ENCODE measurements at regions of chr12 and their contacts with region 1.

Region 1: DNA sequence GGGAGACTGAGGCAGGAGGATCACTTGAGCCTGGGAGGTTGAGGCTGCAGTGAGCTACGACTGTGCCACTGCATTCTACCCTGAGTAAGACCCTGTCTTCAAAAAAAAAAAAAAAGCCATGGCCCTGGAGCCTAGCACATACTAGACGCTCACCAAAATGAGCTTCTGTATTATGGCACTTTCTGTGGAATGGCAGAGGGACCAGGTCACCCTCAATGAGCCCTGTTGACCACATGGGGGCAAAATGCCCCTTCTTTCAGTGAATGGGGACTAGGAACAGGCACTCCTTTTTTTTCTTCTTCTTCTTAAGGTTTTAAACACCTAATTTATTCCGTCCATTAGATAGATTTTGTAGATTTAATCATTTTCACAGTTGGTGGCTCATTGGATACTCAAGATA is 50.5 kb downstream of the FAM222A start:
- DNase-seq: no peak
- ATAC-seq: no peak
- H3K4me3 ChIP-seq: no peak overlapping the region
- H3K4me3 Mint-ChIP-seq: no peak overlapping the region
- H3K27ac ChIP-seq: no peak overlapping the region
- H3K27ac Mint-ChIP-seq: no peak overlapping the region
- H3K4me1 ChIP-seq: no peaks in the 10 kb centered on the region
- H3K4me1 Mint-ChIP-seq: peaks cover 0 to 14% of the 10 kb centered on the region in 2 donors
- H3K27me3 ChIP-seq: no peaks in the 10 kb centered on the region
- H3K27me3 Mint-ChIP-seq: no peaks in the 10 kb centered on the region
- CTCF ChIP-seq: no peak

Region 2: DNA sequence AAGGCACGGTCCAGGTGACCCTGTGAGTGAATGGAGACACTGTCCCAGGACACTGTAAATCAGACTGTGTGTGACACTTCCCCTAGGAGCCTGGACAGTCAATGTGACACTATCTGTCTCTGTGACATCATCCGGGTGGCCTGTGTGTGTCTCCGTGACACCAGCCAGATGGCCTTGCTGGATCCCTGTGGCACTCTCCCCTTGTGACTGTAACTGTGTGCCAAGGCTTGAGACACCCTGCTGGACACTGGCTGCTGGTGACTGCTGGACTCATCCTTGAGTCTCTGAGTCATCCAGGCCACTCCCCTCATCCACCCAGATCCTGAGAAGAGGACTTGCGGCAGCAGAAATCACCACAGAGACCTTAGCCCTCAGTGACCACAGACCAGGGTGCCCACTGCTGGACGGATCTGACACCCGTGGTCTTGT is 139.0 kb before region 1 on chr12:
- intact Hi-C with region 1: no loop called
- DNase-seq: no peak
- ATAC-seq: no peak
- H3K4me3 ChIP-seq: no peak overlapping the region
- H3K4me3 Mint-ChIP-seq: no peak overlapping the region
- H3K27ac ChIP-seq: no peak overlapping the region
- H3K27ac Mint-ChIP-seq: no peak overlapping the region
- H3K4me1 ChIP-seq: no peaks in the 10 kb centered on the region
- H3K4me1 Mint-ChIP-seq: peaks cover 0 to 6% of the 10 kb centered on the region in 2 donors
- H3K27me3 ChIP-seq: no peaks in the 10 kb centered on the region
- H3K27me3 Mint-ChIP-seq: peaks cover 15 to 26% of the 10 kb centered on the region in 2 donors
- CTCF ChIP-seq: no peak

Region 3: GRCh38 chr12:109736552-109737108 is 27.5 kb before region 1 on chr12:
- intact Hi-C with region 1: loop called (anchors 1 kb)
- DNase-seq: peak; percentile 15 to 38
- ATAC-seq: peak; percentile 43 to 88 (median 75)
- H3K4me3 ChIP-seq: no peak overlapping the region
- H3K4me3 Mint-ChIP-seq: no peak overlapping the region
- H3K27ac ChIP-seq: no peak overlapping the region
- H3K27ac Mint-ChIP-seq: no peak overlapping the region
- H3K4me1 ChIP-seq: no peaks in the 10 kb centered on the region
- H3K4me1 Mint-ChIP-seq: no peaks in the 10 kb centered on the region
- H3K27me3 ChIP-seq: peaks cover 2% of the 10 kb centered on the region
- H3K27me3 Mint-ChIP-seq: peaks cover 23 to 24% of the 10 kb centered on the region in 2 donors
- CTCF ChIP-seq: no peak

Region 4: DNA sequence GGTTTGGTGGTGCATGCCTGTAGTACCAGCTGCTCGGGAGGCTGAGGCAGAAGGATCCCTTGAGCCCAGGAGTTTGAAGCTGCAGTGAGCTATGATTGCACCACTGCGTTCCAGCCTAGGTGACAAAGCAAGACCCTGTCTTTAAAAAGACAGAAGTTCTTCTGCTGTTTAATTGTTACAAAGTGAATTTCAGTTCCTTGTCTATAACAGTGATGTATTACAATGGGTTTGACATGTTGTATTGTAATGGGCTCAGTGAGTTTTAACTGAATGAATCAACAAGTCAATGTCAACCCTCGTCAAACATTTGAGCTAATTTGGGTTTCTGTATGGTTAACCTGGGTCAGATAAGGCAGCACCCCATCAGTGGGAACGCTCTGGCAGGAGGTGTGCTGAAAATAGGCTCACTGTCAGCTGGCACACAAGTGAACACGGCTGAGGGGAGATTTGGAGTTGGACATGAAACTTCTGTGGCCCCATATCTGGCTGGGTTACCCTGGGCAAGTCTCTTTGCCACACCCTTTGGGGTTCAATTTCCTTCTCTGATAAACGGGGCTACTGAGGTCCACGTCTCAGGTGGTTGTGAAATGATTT is 83.1 kb after region 1 on chr12:
- intact Hi-C with region 1: no loop called
- DNase-seq: no peak
- ATAC-seq: no peak
- H3K4me3 ChIP-seq: no peak overlapping the region
- H3K4me3 Mint-ChIP-seq: no peak overlapping the region
- H3K27ac ChIP-seq: peak overlapping the region; percentile 11
- H3K27ac Mint-ChIP-seq: no peak overlapping the region
- H3K4me1 ChIP-seq: peaks cover 12% of the 10 kb centered on the region
- H3K4me1 Mint-ChIP-seq: peaks cover 7 to 12% of the 10 kb centered on the region in 2 donors
- H3K27me3 ChIP-seq: no peaks in the 10 kb centered on the region
- H3K27me3 Mint-ChIP-seq: no peaks in the 10 kb centered on the region
- CTCF ChIP-seq: no peak

Region 5: DNA sequence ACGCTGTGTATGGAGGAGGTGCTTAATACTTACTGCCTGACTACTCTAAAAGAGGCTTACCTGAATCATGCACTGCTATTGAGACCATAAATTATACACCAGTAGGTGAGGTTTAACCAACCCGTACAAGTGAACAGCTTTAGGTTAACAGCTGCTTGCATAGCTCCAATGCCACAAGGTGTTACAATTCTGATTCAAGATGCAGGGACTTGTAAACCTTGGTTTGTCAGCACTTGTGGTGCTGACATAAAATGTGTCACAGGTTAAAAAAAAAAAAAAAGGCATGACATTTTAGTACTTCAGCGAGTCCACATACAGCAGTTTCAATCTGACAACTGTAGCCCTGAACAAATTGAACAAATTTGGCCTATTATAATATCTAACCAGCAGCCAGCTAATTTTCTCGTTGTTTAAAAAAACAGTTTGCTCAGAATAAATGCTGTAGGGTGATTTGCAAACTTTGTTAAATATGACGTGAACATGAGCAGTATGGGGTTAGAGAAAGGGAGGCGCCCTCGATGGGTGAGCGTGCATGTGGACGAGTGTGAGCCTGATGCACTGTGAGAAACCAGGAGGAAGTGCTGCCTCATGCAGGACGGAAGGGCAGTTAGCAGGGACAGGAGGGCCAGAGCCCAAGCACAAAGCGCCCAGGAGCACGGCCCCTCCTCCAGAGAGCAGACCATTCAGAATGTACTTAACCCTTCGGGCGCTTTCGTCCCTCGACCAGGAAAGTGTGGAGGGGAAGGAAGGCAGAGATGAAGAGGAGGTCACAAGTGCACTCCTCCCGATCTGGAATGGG is 180.6 kb after region 1 on chr12:
- intact Hi-C with region 1: no loop called
- DNase-seq: peak in 1 of 2 donors; percentile 23
- ATAC-seq: peak; percentile 82 to 87 (median 86)
- H3K4me3 ChIP-seq: no peak overlapping the region
- H3K4me3 Mint-ChIP-seq: peak overlapping the region; percentile 62
- H3K27ac ChIP-seq: peak overlapping the region; percentile 24
- H3K27ac Mint-ChIP-seq: peak overlapping the region; percentile 90
- H3K4me1 ChIP-seq: peaks cover 13% of the 10 kb centered on the region
- H3K4me1 Mint-ChIP-seq: peaks cover 31 to 32% of the 10 kb centered on the region in 2 donors
- H3K27me3 ChIP-seq: no peaks in the 10 kb centered on the region
- H3K27me3 Mint-ChIP-seq: no peaks in the 10 kb centered on the region
- CTCF ChIP-seq: no peak

Measured in natural killer cell (primary cell).